ENCODE measurements at regions of chr11 and their contacts with region 1.

Region 1: GRCh38 chr11:92955860-92956259 is 13.6 kb upstream of the MTNR1B start:
- DNase-seq: no peak
- ATAC-seq: no peak

Region 2: DNA sequence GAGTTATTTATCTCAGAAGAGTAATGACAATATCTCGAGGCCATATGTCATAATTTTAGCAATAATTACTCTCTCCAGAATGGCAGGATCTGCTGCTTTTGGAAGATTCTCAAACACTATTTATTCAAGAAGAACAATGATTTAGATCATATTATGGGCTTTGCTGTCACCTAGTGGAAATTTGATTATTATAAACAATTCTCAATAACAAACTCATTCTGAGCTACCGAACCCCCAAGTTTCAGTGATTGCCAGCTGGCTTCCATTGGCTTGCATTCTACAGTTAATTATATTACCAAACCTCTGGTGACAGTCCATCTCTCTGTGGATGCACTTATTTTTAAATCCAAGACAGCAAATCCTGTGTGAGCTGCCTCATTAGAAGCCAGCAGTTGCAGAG is 269.8 kb after region 1 on chr11:
- intact Hi-C with region 1: loop called (anchors 10 kb)
- DNase-seq: no peak
- ATAC-seq: no peak

Measured in Right ventricle myocardium superior (tissue), 1 donor.